ENCODE measurements at regions of chr1 and their contacts with region 1.

Region 1: DNA sequence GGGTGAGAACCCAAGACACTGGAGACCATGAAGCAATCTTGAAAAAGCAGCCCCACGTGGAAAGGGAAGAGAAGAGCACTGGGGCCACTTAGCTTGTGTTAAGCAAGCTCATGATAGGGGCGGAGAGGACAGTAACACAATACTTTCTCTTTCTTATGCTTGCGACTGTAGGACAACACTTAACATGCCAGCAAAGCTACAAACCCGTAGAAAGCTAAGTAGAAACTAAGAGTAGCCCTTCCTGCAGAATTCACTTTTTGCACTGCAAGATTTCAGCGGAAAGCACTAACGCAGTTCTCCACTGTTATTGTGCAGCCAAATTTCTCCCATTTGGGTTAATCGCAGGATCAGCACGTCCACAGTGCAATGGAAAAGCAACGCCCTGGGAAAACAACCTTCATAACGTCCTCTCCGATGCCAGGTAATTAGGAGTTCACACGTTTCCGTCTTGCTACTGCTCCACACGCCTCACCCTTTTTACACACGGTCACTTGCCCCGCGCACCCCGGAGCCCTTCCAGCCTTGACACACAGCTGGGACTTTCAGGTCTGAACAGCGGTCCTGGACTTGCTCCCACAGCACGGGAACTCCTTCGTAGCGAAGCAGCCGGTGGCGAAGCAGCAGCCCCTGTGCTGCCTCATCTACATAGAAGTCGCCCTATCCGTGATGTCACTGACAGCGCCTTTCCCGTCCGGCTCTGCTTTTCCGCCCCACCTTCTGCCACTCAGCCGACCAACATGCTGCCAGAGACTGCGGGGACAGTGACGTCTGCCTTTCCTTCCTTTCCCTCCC is 148.6 kb downstream of the PPIAL4G start:
- DNase-seq: peak; percentile 90
- ATAC-seq: peak; percentile 96
- H3K4me3 ChIP-seq: peak overlapping the region; percentile 71
- H3K27ac ChIP-seq: peak overlapping the region; percentile 82
- H3K4me1 ChIP-seq: no peaks in the 10 kb centered on the region
- H3K27me3 ChIP-seq: peaks cover 1 to 3% of the 10 kb centered on the region in 2 experiments; a peak in 1 of 4 replicates
- CTCF ChIP-seq: no peak
- EP300 ChIP-seq: 0 out of 4 replicates have a peak, but pooled peaks of 1 of the 2 experiments have one; percentile 14
- POLR2A ChIP-seq: peak; percentile 99
- RAD21 ChIP-seq: peak; percentile 5; the same call in 1 of the 2 replicates

Region 2: DNA sequence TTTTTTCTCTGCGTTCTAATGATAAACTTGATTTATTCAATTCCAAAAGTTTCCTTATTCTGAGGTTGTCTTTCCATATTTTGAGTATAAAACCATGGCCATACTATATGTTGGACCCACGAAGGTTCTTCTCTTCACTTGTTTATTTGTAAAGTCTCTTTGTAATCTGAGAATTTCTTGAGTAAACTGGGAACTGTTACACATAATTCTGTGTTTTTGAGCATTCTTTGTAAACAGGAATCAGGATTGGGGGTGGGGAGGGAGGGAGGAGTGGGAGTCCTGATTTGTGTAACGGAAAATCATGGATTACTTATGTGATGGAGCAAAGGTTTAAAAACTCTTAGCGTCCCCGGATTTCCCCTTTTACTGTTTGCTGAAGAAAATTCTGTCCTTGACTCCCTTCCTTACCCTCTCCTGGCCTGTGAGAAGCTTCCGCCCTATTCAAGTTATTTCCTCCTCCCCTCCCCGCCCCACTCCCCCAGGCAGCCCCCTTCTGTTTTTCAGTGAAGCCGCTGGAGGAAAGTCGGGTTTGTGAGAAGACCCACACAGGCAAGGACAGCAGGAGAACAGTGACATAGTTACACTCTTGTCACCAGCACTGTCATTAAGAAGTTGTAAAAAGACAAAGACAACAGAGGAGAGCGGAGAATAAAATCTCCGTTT is 176.1 kb before region 1 on chr1:
- CTCF ChIA-PET with region 1: no interaction called
- POLR2A ChIA-PET with region 1: no interaction called
- RAD21 ChIA-PET with region 1: no interaction called
- SMC1A ChIA-PET with region 1: no interaction called
- in situ Hi-C with region 1: no loop called
- intact Hi-C with region 1: loop called (anchors 5 kb)
- DNase-seq: no peak
- ATAC-seq: no peak
- H3K4me3 ChIP-seq: no peak overlapping the region; the same call in 1 of the 2 replicates
- H3K27ac ChIP-seq: no peak overlapping the region
- H3K4me1 ChIP-seq: no peaks in the 10 kb centered on the region
- H3K27me3 ChIP-seq: no peaks in the 10 kb centered on the region
- CTCF ChIP-seq: no peak
- EP300 ChIP-seq: no peak
- POLR2A ChIP-seq: no peak
- RAD21 ChIP-seq: no peak

Region 3: GRCh38 chr1:148263128-148263905 is 71.2 kb before region 1 on chr1:
- CTCF ChIA-PET with region 1: no interaction called
- POLR2A ChIA-PET with region 1: no interaction called
- RAD21 ChIA-PET with region 1: no interaction called
- SMC1A ChIA-PET with region 1: no interaction called
- in situ Hi-C with region 1: no loop called
- intact Hi-C with region 1: loop called (anchors 1 kb)
- DNase-seq: peak; percentile 68
- ATAC-seq: peak; percentile 93
- H3K4me3 ChIP-seq: peak overlapping the region; percentile 73
- H3K27ac ChIP-seq: no peak overlapping the region
- H3K4me1 ChIP-seq: peaks cover 3% of the 10 kb centered on the region; the same call in 1 of the 2 replicates
- H3K27me3 ChIP-seq: peaks cover 2 to 4% of the 10 kb centered on the region in 2 experiments; a peak in 3 of 4 replicates
- CTCF ChIP-seq: no peak
- EP300 ChIP-seq: no peak
- POLR2A ChIP-seq: peak; percentile 94
- RAD21 ChIP-seq: no peak

Region 4: GRCh38 chr1:148293651-148294050 is 40.9 kb before region 1 on chr1:
- CTCF ChIA-PET with region 1: no interaction called
- POLR2A ChIA-PET with region 1: no interaction called
- RAD21 ChIA-PET with region 1: no interaction called
- SMC1A ChIA-PET with region 1: no interaction called
- in situ Hi-C with region 1: no loop called
- intact Hi-C with region 1: no loop called
- DNase-seq: no peak
- ATAC-seq: no peak
- H3K4me3 ChIP-seq: no peak overlapping the region
- H3K27ac ChIP-seq: no peak overlapping the region
- H3K4me1 ChIP-seq: no peaks in the 10 kb centered on the region
- H3K27me3 ChIP-seq: no peaks in the 10 kb centered on the region
- CTCF ChIP-seq: no peak
- EP300 ChIP-seq: no peak
- POLR2A ChIP-seq: no peak
- RAD21 ChIP-seq: no peak

Region 5: GRCh38 chr1:148307583-148308190 is 26.8 kb before region 1 on chr1:
- CTCF ChIA-PET with region 1: no interaction called
- POLR2A ChIA-PET with region 1: no interaction called
- RAD21 ChIA-PET with region 1: no interaction called
- SMC1A ChIA-PET with region 1: no interaction called
- in situ Hi-C with region 1: no loop called
- intact Hi-C with region 1: no loop called
- DNase-seq: no peak
- ATAC-seq: no peak
- H3K4me3 ChIP-seq: no peak overlapping the region
- H3K27ac ChIP-seq: no peak overlapping the region
- H3K4me1 ChIP-seq: no peaks in the 10 kb centered on the region
- H3K27me3 ChIP-seq: no peaks in the 10 kb centered on the region; a peak in 1 of 4 replicates
- CTCF ChIP-seq: no peak
- EP300 ChIP-seq: no peak
- POLR2A ChIP-seq: no peak
- RAD21 ChIP-seq: no peak

Region 6: GRCh38 chr1:148355976-148356375 is 21.4 kb after region 1 on chr1:
- CTCF ChIA-PET with region 1: no interaction called
- POLR2A ChIA-PET with region 1: no interaction called
- RAD21 ChIA-PET with region 1: no interaction called
- SMC1A ChIA-PET with region 1: no interaction called
- in situ Hi-C with region 1: no loop called
- intact Hi-C with region 1: no loop called
- DNase-seq: no peak
- ATAC-seq: no peak
- H3K4me3 ChIP-seq: no peak overlapping the region
- H3K27ac ChIP-seq: no peak overlapping the region
- H3K4me1 ChIP-seq: no peaks in the 10 kb centered on the region
- H3K27me3 ChIP-seq: peaks cover 5% of the 10 kb centered on the region in 2 experiments; a peak in 2 of 4 replicates
- CTCF ChIP-seq: no peak
- EP300 ChIP-seq: no peak
- POLR2A ChIP-seq: no peak
- RAD21 ChIP-seq: no peak